Panc1 (cell line): ENCODE measurements at regions of chr2 and their contacts with region 1.

Region 1: DNA sequence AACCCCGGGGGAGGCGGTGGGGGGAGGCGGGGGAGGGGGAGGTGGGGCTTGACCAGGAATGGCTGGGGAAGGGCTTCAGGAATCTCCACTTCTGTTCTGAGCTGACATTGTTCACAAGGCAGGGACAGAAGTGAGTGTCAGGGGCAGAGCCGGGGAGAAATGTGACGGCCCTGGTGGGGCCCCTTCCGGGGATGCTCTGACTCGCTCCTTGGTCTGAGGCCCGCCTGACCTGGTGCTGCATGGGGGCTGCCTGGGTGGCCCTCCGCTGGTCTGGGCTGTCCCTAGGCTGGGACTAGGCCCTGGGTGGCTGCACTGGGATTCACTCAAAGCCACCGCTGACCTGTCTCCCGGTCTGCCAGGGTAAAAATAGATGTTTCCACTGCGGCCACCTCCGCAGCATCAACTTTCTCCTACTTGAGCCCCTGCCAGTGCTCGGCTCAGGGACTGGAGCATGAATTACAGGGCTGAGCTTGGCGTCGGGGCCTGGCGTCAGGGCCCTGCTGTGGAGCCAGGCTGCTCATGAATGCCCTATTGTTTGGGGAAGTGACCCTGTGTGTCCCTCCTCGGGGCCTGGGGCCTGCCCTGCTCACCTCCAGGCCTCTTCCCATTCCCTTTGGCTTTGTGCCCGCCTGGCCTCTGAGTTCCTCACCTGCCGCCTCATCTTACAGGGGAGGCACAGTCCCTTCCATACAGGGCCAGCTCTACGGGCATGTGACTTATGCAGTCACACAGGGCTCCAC is 247.5 kb downstream of the DYSF start:
- DNase-seq: no peak
- ATAC-seq: no peak
- H3K4me3 ChIP-seq: no peak overlapping the region
- H3K27ac ChIP-seq: no peak overlapping the region
- H3K4me1 ChIP-seq: peaks cover 3% of the 10 kb centered on the region; the same call in 1 of the 2 replicates
- H3K27me3 ChIP-seq: no peaks in the 10 kb centered on the region
- CTCF ChIP-seq: no peak

Region 2: DNA sequence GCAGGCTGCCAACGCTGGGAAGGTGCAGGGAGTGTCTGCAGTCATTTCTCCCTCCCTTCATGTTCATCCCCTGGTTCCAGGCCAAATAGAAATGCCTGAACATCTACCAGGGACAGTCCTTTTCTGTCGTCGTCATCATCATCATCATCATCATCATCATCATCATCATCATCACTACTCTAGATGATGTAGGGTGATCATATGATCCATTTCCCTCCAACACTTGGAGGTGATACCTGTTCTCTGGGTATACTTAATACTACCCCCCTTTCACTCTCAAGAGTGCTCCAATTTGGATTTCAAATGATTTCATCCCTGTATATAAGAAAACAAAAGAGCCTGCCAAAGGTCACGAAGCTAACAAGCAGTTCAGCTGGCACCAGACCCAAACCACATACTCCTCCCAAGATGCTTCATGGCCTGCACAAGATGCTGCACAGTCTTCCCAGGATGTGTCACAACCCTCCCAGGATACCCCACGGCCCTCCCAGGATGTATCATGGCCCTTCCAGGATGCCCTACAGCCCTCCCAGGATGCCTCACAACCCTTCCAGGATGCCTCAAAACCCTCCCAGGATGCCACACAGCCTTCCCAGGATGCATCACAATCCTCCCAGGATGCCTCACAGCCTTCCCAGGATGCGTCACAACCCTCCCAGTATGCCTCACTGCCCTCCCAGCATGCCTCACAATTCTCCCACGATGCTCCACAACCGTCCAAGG is 10.5 kb after region 1 on chr2:
- CTCF ChIA-PET with region 1: no interaction called
- POLR2A ChIA-PET with region 1: no interaction called
- in situ Hi-C with region 1: no loop called
- intact Hi-C with region 1: no loop called
- DNase-seq: no peak
- ATAC-seq: no peak
- H3K4me3 ChIP-seq: no peak overlapping the region
- H3K27ac ChIP-seq: no peak overlapping the region
- H3K4me1 ChIP-seq: no peaks in the 10 kb centered on the region
- H3K27me3 ChIP-seq: no peaks in the 10 kb centered on the region
- CTCF ChIP-seq: no peak

Region 3: GRCh38 chr2:71749671-71750101 is 48.9 kb after region 1 on chr2:
- CTCF ChIA-PET with region 1: no interaction called
- POLR2A ChIA-PET with region 1: interaction called, 15 read pairs
- in situ Hi-C with region 1: no loop called
- intact Hi-C with region 1: no loop called
- DNase-seq: no peak
- ATAC-seq: no peak
- H3K4me3 ChIP-seq: no peak overlapping the region
- H3K27ac ChIP-seq: peak overlapping the region; percentile 2; the same call in 1 of the 2 replicates
- H3K4me1 ChIP-seq: peaks cover 35% of the 10 kb centered on the region
- H3K27me3 ChIP-seq: no peaks in the 10 kb centered on the region
- CTCF ChIP-seq: no peak

Region 4: DNA sequence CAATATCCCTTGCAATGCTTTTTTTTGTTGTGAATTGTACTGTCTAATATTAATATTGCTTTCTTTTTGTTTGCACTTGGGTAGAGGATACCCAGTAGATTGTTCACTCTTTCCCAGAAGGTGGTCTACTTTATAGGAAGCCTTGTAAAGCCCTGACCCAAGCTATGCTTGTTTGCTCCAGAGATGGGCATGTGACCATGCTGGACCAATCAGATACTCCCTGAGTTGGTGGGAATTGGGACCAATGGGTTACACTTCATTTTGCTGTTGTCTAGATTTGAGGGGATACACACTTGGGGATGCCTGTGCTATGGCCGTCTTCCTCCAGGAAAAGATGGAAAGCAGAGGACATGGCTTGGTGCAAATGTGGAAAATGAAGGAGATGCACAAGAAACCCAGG is 66.8 kb after region 1 on chr2:
- CTCF ChIA-PET with region 1: interaction called, 11 read pairs
- POLR2A ChIA-PET with region 1: no interaction called
- in situ Hi-C with region 1: no loop called
- intact Hi-C with region 1: no loop called
- DNase-seq: no peak
- ATAC-seq: no peak
- H3K4me3 ChIP-seq: no peak overlapping the region
- H3K27ac ChIP-seq: no peak overlapping the region
- H3K4me1 ChIP-seq: no peaks in the 10 kb centered on the region
- H3K27me3 ChIP-seq: no peaks in the 10 kb centered on the region
- CTCF ChIP-seq: no peak

Region 5: DNA sequence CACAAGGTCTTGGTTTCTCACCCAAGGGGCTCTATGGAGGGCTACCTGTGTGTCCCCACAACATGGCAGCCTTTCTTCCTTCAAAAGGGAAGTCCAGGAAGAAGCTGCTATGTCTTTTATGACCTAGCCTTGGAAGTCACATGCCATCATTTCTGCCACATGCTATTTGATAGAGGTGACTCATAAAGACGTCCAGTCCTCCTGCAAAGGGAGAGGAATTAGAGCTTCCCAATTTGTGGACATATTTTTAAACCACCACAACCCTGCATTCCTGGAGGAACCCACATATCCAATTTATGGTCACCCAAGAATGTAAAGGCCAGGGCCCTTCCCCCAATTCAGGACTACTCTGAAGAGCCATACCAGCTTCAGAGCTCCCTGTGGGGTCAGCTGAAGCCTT is 200.6 kb after region 1 on chr2:
- CTCF ChIA-PET with region 1: no interaction called
- POLR2A ChIA-PET with region 1: no interaction called
- in situ Hi-C with region 1: no loop called
- intact Hi-C with region 1: no loop called
- DNase-seq: no peak
- ATAC-seq: no peak
- H3K4me3 ChIP-seq: no peak overlapping the region
- H3K27ac ChIP-seq: no peak overlapping the region
- H3K4me1 ChIP-seq: no peaks in the 10 kb centered on the region
- H3K27me3 ChIP-seq: peaks cover 8% of the 10 kb centered on the region
- CTCF ChIP-seq: no peak